H1 (cell line): ENCODE measurements at regions of chr1 and their contacts with region 1.

Region 1: GRCh38 chr1:26695356-26696118 is at the start of gene ARID1A:
- DNase-seq: peak; percentile 73 to 97
- H3K4me3 ChIP-seq: peak within 1 kb of the TSS; percentile 88 to 95 (median 92)
- H3K27ac ChIP-seq: peak within 1 kb of the TSS; percentile 93
- H3K4me1 ChIP-seq: peaks cover 14 to 19% (median 16%) of the 10 kb centered on the region in 4 experiments; a peak in 6 of 7 replicates
- H3K27me3 ChIP-seq: no peaks in the 10 kb centered on the region
- CTCF ChIP-seq: no peak
- EP300 ChIP-seq: peak in 1 of 2 experiments; percentile 70; a peak in 1 of 3 replicates
- POLR2A ChIP-seq: peak; percentile 72 to 75
- RAD21 ChIP-seq: peak; percentile 6 to 13; a peak in 2 of 4 replicates
- total RNA-seq, gene ARID1A: 103 and 105 TPM in 2 replicates

Region 2: GRCh38 chr1:26555550-26556510 is 139.7 kb before region 1 on chr1:
- CTCF ChIA-PET with region 1: no interaction called
- POLR2A ChIA-PET with region 1: no interaction called
- DNase-seq: no peak
- H3K4me3 ChIP-seq: no peak overlapping the region
- H3K27ac ChIP-seq: no peak overlapping the region
- H3K4me1 ChIP-seq: no peaks in the 10 kb centered on the region
- H3K27me3 ChIP-seq: no peaks in the 10 kb centered on the region; a peak in 1 of 7 replicates
- CTCF ChIP-seq: no peak
- EP300 ChIP-seq: no peak
- POLR2A ChIP-seq: no peak
- RAD21 ChIP-seq: no peak

Region 3: DNA sequence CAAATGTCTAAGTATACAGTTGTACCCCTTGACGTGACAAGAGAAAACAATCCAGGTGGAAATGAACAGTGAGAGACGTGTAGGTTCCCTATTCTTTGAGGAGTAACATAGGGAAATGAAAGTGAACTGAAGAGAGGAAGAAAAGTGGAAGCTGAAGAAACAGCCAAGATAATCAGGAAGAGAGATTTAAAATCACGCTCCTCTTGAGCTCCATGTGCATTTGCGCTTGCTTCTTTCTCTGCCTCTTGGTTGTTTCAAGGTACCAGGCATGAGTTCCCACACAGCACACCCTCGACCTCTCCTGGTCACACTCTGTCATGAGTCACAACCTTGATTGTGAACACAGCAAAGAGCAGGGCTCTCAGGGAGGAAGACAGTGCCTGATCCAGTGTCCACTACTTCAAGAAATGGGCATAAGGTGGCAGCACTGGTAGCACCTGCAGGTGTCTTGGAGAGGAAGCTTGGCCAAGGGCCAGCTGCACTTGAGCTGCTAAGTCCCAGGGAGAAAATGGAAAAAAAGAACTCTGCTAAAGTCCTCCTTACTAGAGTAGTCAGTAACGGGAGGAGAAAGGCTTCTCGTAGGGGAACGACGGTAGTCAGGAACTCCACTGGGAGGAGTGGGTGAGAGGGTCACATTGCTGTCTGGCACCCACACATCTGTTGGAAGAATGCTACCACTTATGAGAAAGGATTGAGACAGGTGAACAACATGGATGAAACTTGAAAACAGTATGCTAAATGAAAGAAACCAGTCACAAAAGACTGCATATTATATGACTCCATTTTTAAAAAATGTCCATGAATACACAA is 18.0 kb before region 1 on chr1:
- CTCF ChIA-PET with region 1: interaction called, 16 read pairs
- POLR2A ChIA-PET with region 1: interaction called, 24 read pairs
- DNase-seq: peak in 1 of 2 experiments; percentile 58
- H3K4me3 ChIP-seq: no peak overlapping the region
- H3K27ac ChIP-seq: no peak overlapping the region
- H3K4me1 ChIP-seq: peaks cover 0 to 3% (median 0%) of the 10 kb centered on the region in 4 experiments; a peak in 1 of 7 replicates
- H3K27me3 ChIP-seq: peaks cover 0 to 2% (median 0%) of the 10 kb centered on the region in 4 experiments; a peak in 1 of 7 replicates
- CTCF ChIP-seq: peak; percentile 40 to 88 (median 71)
- EP300 ChIP-seq: no peak
- POLR2A ChIP-seq: no peak
- RAD21 ChIP-seq: peak; percentile 68 to 77

Region 4: GRCh38 chr1:26705788-26706311 is 10.3 kb after region 1 on chr1:
- CTCF ChIA-PET with region 1: interaction called, 10 read pairs
- POLR2A ChIA-PET with region 1: interaction called, 46 read pairs
- DNase-seq: no peak
- H3K4me3 ChIP-seq: 0 out of 8 replicates have a peak overlapping the region, but pooled peaks of 1 of the 4 experiments have one; percentile 1
- H3K27ac ChIP-seq: no peak overlapping the region
- H3K4me1 ChIP-seq: peaks cover under 1 to 16% (median 12%) of the 10 kb centered on the region in 4 experiments; a peak in 6 of 7 replicates
- H3K27me3 ChIP-seq: no peaks in the 10 kb centered on the region
- CTCF ChIP-seq: no peak
- EP300 ChIP-seq: no peak
- POLR2A ChIP-seq: no peak
- RAD21 ChIP-seq: no peak

Region 5: GRCh38 chr1:26723013-26723991 is 27.8 kb after region 1 on chr1:
- CTCF ChIA-PET with region 1: interaction called, 25 read pairs
- POLR2A ChIA-PET with region 1: interaction called, 256 read pairs
- DNase-seq: peak in 1 of 2 experiments; percentile 79
- H3K4me3 ChIP-seq: peak overlapping the region in 3 of 4 experiments; percentile 2 to 42 (median 15); a peak in 5 of 8 replicates
- H3K27ac ChIP-seq: peak overlapping the region; percentile 54
- H3K4me1 ChIP-seq: peaks cover 20 to 42% (median 26%) of the 10 kb centered on the region in 4 experiments
- H3K27me3 ChIP-seq: no peaks in the 10 kb centered on the region
- CTCF ChIP-seq: no peak
- EP300 ChIP-seq: no peak
- POLR2A ChIP-seq: peak in 1 of 2 experiments; percentile 69; a peak in 1 of 3 replicates
- RAD21 ChIP-seq: no peak

Region 6: GRCh38 chr1:26730695-26731094 is 35.2 kb after region 1 on chr1:
- CTCF ChIA-PET with region 1: interaction called, 25 read pairs
- POLR2A ChIA-PET with region 1: interaction called, 256 read pairs
- DNase-seq: no peak
- H3K4me3 ChIP-seq: no peak overlapping the region
- H3K27ac ChIP-seq: no peak overlapping the region
- H3K4me1 ChIP-seq: peaks cover 7 to 21% (median 14%) of the 10 kb centered on the region in 4 experiments; a peak in 6 of 7 replicates
- H3K27me3 ChIP-seq: no peaks in the 10 kb centered on the region
- CTCF ChIP-seq: no peak
- EP300 ChIP-seq: no peak
- POLR2A ChIP-seq: no peak
- RAD21 ChIP-seq: no peak